ENCODE measurements at regions of chr3 and their contacts with region 1.

Region 1: GRCh38 chr3:16923112-16923511 is 38.4 kb downstream of the PLCL2 start:
- DNase-seq: no peak
- H3K4me3 ChIP-seq: no peak overlapping the region
- CTCF ChIP-seq: no peak

Region 2: GRCh38 chr3:16849795-16850194 is 73.3 kb before region 1 on chr3:
- in situ Hi-C with region 1: no loop called
- DNase-seq: peak; percentile 18
- H3K4me3 ChIP-seq: no peak overlapping the region
- CTCF ChIP-seq: no peak

Region 3: GRCh38 chr3:16993227-16993626 is 70.1 kb after region 1 on chr3:
- in situ Hi-C with region 1: loop called (anchors 5 kb)
- DNase-seq: no peak
- H3K4me3 ChIP-seq: no peak overlapping the region
- CTCF ChIP-seq: no peak

Measured in astrocyte of the cerebellum (primary cell).